Caco-2 (cell line): ENCODE measurements at regions of chr12 and their contacts with region 1.

Region 1: GRCh38 chr12:5083955-5084849 is 40.5 kb downstream of the KCNA5 start:
- DNase-seq: peak in 1 of 2 experiments; percentile 73
- H3K4me3 ChIP-seq: no peak overlapping the region
- H3K4me3 Mint-ChIP-seq: no peak overlapping the region
- H3K27ac Mint-ChIP-seq: no peak overlapping the region
- H3K4me1 ChIP-seq: no peaks in the 10 kb centered on the region
- H3K4me1 Mint-ChIP-seq: no peaks in the 10 kb centered on the region
- H3K27me3 ChIP-seq: peaks cover 3% of the 10 kb centered on the region; the same call in 1 of the 2 replicates
- H3K27me3 Mint-ChIP-seq: peaks cover 31% of the 10 kb centered on the region
- CTCF ChIP-seq: peak; percentile 78 to 82

Region 2: GRCh38 chr12:4975574-4975973 is 108.6 kb before region 1 on chr12:
- CTCF ChIA-PET with region 1: no interaction called
- POLR2A ChIA-PET with region 1: no interaction called
- intact Hi-C with region 1: no loop called
- DNase-seq: no peak
- H3K4me3 ChIP-seq: no peak overlapping the region
- H3K4me3 Mint-ChIP-seq: no peak overlapping the region
- H3K27ac Mint-ChIP-seq: no peak overlapping the region
- H3K4me1 ChIP-seq: peaks cover 6% of the 10 kb centered on the region
- H3K4me1 Mint-ChIP-seq: peaks cover 11% of the 10 kb centered on the region
- H3K27me3 ChIP-seq: no peaks in the 10 kb centered on the region; the same call in 1 of the 2 replicates
- H3K27me3 Mint-ChIP-seq: peaks cover 22% of the 10 kb centered on the region
- CTCF ChIP-seq: no peak

Region 3: DNA sequence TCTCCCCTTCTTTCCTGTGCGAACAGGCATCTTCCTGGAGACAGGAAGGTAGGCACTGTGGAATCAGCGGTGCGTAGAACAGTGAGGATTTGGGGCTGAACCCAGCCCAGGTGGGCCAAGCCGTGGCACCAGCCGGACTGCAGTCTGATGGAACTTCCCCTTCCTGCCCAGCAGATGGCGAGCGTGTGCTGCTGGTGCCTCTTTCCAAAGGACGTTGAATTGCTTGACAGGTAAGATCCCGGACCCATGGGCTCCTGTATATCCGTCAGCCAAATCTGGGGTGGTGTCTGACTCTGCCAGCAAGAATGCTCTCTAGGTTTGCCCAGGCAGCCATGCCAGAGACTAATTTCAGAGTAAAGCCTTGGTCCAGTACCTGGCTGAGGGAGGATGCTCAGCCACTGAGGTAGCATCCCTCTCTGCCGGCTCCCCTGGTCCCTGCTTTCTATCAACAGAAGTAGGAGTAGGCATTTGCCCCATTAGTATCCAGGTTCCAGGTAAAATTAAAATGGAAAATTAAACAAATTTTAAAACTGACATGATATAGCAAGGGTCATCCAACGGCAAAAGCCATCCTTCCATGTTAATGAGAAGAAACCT is 61.6 kb before region 1 on chr12:
- CTCF ChIA-PET with region 1: interaction called, 15 read pairs
- POLR2A ChIA-PET with region 1: no interaction called
- intact Hi-C with region 1: loop called (anchors 1 kb)
- DNase-seq: peak in 1 of 2 experiments; percentile 65
- H3K4me3 ChIP-seq: no peak overlapping the region
- H3K4me3 Mint-ChIP-seq: no peak overlapping the region
- H3K27ac Mint-ChIP-seq: no peak overlapping the region
- H3K4me1 ChIP-seq: no peaks in the 10 kb centered on the region
- H3K4me1 Mint-ChIP-seq: no peaks in the 10 kb centered on the region
- H3K27me3 ChIP-seq: peaks cover 3% of the 10 kb centered on the region; the same call in 1 of the 2 replicates
- H3K27me3 Mint-ChIP-seq: peaks cover 28% of the 10 kb centered on the region
- CTCF ChIP-seq: peak; percentile 98 to 99